Colonic mucosa (tissue), 4 donors: ENCODE measurements at regions of chr9 and their contacts with region 1.

Region 1: GRCh38 chr9:613771-614347 is 227.6 kb upstream of the DMRT1 start:
- DNase-seq: peak; percentile 67
- H3K4me3 ChIP-seq: no peak overlapping the region
- H3K27ac ChIP-seq: no peak overlapping the region
- H3K4me1 ChIP-seq: no peaks in the 10 kb centered on the region
- H3K27me3 ChIP-seq: no peaks in the 10 kb centered on the region
- CTCF ChIP-seq: peak; percentile 38

Region 2: GRCh38 chr9:385818-386398 is 228.0 kb before region 1 on chr9:
- intact Hi-C with region 1: loop called (anchors 5 kb)
- DNase-seq: peak; percentile 66
- H3K4me3 ChIP-seq: no peak overlapping the region
- H3K27ac ChIP-seq: no peak overlapping the region
- H3K4me1 ChIP-seq: no peaks in the 10 kb centered on the region
- H3K27me3 ChIP-seq: no peaks in the 10 kb centered on the region
- CTCF ChIP-seq: peak; percentile 88

Region 3: GRCh38 chr9:758146-758545 is 144.3 kb after region 1 on chr9:
- intact Hi-C with region 1: loop called (anchors 2 kb)
- DNase-seq: no peak
- H3K4me3 ChIP-seq: no peak overlapping the region
- H3K27ac ChIP-seq: no peak overlapping the region
- H3K4me1 ChIP-seq: no peaks in the 10 kb centered on the region
- H3K27me3 ChIP-seq: no peaks in the 10 kb centered on the region
- CTCF ChIP-seq: no peak

Region 4: DNA sequence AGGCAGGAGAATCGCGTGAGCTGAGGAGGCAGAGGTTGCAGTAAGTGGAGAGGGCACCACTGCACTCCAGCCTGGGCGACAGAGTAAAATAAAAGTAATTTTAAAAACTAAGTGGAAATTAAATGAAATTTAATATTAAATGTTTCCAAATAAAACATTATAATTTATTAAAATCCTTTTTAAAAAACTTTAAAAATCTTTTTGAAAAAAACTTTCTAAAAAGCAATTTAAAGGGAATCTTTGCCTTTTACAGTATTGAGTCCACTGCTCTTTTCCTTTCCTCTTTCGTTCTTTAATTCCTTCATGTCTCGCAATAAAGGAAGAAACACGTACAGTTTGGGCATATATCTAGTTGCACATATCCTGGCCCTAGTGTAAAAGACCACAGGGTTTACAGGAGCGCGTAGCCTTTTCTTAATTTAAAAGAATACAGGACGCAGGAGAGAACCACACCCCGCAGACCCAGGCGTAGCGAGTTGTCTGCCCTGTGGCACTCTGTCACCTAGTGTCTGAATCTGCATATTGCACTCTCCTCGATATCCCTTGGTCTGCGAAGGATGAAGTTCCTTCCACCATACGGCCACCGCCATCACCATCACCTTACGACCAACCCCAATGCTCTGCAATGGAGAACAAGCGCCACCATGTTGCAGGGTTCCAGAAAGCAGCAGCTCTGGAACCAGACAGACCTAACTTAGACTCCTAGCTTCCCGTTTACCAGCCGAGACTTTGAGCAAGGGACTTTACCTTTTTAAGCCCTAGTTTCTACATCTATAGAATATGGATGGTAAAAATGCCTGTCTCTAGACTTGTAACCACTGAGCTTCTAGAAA is 150.0 kb after region 1 on chr9:
- intact Hi-C with region 1: loop called (anchors 2 kb)
- DNase-seq: peak; percentile 76
- H3K4me3 ChIP-seq: no peak overlapping the region
- H3K27ac ChIP-seq: no peak overlapping the region
- H3K4me1 ChIP-seq: no peaks in the 10 kb centered on the region
- H3K27me3 ChIP-seq: no peaks in the 10 kb centered on the region
- CTCF ChIP-seq: peak; percentile 88

Region 5: GRCh38 chr9:995723-996122 is 381.9 kb after region 1 on chr9:
- intact Hi-C with region 1: no loop called
- DNase-seq: no peak
- H3K4me3 ChIP-seq: no peak overlapping the region
- H3K27ac ChIP-seq: no peak overlapping the region
- H3K4me1 ChIP-seq: no peaks in the 10 kb centered on the region
- H3K27me3 ChIP-seq: no peaks in the 10 kb centered on the region
- CTCF ChIP-seq: no peak

Region 6: DNA sequence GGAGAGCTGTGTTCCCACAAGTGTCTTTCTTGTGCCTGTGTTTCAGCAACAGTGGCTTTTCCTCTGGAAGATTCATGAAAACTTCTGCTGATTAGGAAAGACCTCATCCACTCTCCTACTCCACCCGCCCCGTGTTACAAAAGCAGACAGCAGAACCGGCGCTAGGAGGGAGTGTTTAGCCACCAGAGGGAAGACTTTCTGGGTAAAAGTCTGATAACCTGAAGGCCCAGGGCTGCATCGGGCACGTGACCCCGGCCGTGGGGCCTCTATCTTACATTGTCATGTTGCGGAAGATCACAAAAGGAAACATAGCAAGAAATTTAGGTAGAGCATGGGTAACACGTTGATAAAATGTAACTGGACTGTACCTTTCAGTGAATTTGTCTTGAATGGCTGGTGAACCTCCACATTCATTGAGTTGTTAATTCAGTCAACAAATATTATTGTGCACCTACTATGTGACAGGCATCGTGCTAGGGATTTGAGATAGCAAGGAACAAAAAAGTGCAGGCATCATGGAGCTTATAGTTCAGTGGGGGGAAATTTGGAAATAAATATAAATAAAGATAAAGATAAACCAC is 404.4 kb after region 1 on chr9:
- intact Hi-C with region 1: loop called (anchors 10 kb)
- DNase-seq: peak; percentile 40
- H3K4me3 ChIP-seq: no peak overlapping the region
- H3K27ac ChIP-seq: no peak overlapping the region
- H3K4me1 ChIP-seq: no peaks in the 10 kb centered on the region
- H3K27me3 ChIP-seq: no peaks in the 10 kb centered on the region
- CTCF ChIP-seq: peak; percentile 30